Prostate gland (tissue), 2 donors: ENCODE measurements at regions of chr17 and their contacts with region 1.

Region 1: DNA sequence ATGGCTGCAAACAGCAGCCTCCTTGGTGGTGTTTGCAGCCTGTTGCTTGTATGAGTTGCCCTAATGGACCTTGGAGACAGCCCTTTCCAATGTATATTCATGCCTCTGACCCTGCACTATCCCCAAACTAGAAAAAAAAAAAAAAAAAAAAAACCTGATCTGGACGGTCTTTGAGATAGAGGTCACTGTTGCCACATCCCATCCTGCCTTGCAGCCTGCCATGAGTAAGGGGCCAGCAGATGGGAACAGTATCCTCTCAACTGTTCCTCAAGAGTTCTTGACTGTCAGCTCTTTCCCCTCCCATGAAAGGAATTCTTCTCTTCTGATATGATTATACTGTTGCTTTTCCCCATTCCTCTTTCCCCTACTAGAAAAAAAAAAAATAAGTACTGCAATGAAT is 152.4 kb downstream of the SSH2 start:
- DNase-seq: no peak
- H3K4me3 ChIP-seq: no peak overlapping the region
- H3K27ac ChIP-seq: no peak overlapping the region
- H3K4me1 ChIP-seq: no peaks in the 10 kb centered on the region
- H3K27me3 ChIP-seq: no peaks in the 10 kb centered on the region
- CTCF ChIP-seq: no peak
- POLR2A ChIP-seq: no peak

Region 2: DNA sequence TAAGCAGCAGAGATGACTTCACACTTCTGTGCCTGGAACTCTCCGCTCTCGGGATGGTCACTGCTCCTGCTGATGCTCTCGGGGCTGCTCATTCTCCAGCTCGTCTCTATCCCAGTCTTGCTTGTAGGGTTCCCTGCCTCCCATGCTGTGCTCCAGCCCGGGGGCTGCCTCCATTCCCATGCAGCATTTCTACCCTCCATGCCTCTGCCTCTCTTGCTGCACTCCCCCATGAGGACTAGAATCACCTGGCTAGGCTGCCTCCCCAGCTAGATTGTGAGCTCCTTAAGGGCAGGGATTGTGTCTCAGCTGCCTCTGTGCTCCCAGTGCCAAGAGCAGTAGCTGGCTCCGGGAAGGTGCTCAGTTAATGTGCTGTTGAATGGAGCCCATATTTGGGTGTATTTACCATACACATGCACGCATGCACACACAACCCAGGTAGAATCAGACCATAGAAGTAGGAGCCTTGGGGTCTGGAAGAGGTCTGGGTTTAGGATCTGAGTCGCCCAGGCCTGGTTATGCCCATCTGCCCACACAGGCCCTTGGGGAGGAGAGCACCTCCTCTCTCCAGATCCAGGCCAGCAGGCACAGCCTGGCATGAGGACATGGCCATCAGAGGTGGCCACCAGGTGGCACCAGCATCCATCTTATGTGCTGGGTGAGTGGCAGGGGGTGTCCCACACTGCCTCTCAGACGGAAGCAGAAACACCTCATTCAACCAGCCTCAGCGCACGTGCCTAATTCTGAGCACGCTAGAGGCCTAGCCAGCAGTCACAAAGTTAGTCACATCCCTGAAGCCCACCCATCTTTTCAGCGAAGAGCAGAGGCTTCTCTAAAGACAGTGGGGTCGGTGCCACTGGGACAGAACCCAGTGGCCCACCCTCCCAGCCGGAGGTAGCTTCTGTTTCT is 197.5 kb before region 1 on chr17:
- intact Hi-C with region 1: loop called (anchors 5 kb)
- DNase-seq: peak; percentile 85
- H3K4me3 ChIP-seq: no peak overlapping the region
- H3K27ac ChIP-seq: no peak overlapping the region
- H3K4me1 ChIP-seq: no peaks in the 10 kb centered on the region
- H3K27me3 ChIP-seq: no peaks in the 10 kb centered on the region
- CTCF ChIP-seq: peak; percentile 78 to 97 (median 90)
- POLR2A ChIP-seq: no peak

Region 3: DNA sequence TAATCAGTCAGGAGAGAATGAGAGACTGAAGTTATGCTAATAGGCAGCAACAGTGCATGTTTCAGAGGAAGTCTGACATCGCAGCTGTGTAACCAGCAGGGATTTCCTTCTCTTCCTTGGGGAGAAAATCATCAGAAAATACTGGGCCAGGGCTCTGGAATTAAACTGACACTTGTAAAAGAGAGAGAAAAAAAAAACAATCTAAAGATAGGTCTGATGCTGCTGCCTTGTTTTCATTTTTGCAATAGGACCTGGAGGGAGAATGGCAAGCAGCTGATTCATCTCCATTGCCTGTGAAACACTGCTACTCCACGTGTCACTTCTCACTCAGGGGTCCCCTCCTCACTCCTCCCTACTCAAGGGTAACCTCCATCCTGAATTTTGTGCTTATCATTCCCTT is 137.2 kb before region 1 on chr17:
- intact Hi-C with region 1: loop called (anchors 1 kb)
- DNase-seq: no peak
- H3K4me3 ChIP-seq: no peak overlapping the region
- H3K27ac ChIP-seq: peak overlapping the region; percentile 21 to 47
- H3K4me1 ChIP-seq: peaks cover 6% of the 10 kb centered on the region
- H3K27me3 ChIP-seq: no peaks in the 10 kb centered on the region
- CTCF ChIP-seq: no peak
- POLR2A ChIP-seq: no peak

Region 4: DNA sequence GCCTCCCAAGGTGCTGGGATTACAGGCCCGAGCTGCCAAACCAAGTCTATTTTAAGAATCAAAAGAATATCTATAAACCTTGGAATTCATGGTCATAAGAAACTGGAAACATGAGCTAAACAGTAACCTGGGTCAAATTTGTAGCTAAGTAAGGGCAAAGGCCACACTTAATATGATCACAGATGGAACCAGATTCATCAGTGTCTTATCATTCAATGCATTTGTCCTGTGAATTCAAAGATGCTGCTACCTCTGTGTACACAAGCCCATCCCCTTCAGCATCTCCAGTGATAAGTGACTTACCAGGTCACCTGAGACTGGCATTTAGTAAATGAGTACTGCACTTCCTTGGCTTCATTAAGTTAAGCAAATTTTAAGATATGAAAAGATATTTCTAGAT is 44.2 kb after region 1 on chr17:
- intact Hi-C with region 1: no loop called
- DNase-seq: no peak
- H3K4me3 ChIP-seq: no peak overlapping the region
- H3K27ac ChIP-seq: no peak overlapping the region
- H3K4me1 ChIP-seq: no peaks in the 10 kb centered on the region
- H3K27me3 ChIP-seq: no peaks in the 10 kb centered on the region
- CTCF ChIP-seq: no peak
- POLR2A ChIP-seq: no peak